ENCODE measurements at regions of chr9 and their contacts with region 1.

Region 1: DNA sequence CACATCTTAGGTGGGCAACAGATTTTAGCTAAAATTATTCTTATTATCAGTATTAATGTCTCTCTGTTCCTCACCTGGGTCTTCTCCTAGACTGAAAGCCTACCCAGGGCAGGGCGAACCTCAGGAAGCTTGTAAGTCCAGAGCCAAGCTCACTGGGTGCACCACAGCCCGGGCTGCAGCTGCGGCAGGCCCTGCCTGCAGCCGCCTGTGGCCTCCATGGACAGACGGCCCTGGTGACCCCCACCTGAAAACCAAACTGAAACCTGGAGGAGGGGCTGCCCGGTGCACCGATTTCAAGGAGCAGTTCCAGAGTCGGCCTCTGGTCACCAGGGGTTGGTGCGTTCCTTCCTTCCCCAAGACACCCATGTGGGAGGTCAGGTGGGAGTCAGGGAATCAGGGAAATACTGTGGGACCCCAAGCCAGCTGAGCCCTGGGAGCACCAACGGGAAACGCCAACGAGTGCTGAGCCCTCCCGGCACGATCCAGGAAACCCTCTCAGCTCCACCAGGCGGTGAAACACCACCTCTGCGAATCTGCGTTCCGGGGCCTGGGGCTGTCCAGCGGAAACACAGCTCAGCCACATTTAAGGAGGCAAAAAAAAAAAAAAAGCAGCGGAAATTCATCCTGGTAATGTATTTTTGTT is 68.6 kb upstream of the PPP1R26 start:
- DNase-seq: peak in 1 of 2 experiments; percentile 56
- H3K4me3 ChIP-seq: no peak overlapping the region
- H3K27ac ChIP-seq: no peak overlapping the region
- H3K4me1 ChIP-seq: no peaks in the 10 kb centered on the region
- H3K27me3 ChIP-seq: no peaks in the 10 kb centered on the region; a peak in 2 of 7 replicates
- CTCF ChIP-seq: peak in 2 of 3 experiments; percentile 16 to 29; a peak in 2 of 4 replicates
- EP300 ChIP-seq: no peak
- POLR2A ChIP-seq: no peak
- RAD21 ChIP-seq: peak in 1 of 2 experiments; percentile 35; a peak in 3 of 4 replicates

Region 2: DNA sequence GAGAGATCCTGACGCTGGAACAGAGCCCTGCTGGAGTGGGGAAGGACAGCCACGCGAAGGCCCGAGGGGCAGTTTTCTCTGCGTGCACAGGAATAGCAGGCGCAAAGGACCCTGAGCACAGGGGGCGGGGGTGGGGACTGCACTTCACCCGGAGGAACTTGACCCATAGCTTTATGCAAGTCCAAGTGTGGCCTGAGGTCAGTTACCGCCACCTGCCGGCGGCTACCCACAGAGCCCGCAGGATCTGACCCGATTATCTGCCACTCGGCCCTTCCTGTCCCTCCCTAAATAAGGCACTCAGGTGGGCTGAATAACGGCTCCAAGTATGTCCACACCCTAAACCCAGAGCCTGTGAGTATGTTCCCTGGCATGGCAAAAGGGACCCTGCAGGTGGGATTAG is 427.9 kb before region 1 on chr9:
- CTCF ChIA-PET with region 1: no interaction called
- POLR2A ChIA-PET with region 1: no interaction called
- DNase-seq: peak; percentile 64 to 80
- H3K4me3 ChIP-seq: no peak overlapping the region
- H3K27ac ChIP-seq: no peak overlapping the region
- H3K4me1 ChIP-seq: peaks cover 0 to 8% (median 6%) of the 10 kb centered on the region in 4 experiments; a peak in 6 of 7 replicates
- H3K27me3 ChIP-seq: no peaks in the 10 kb centered on the region
- CTCF ChIP-seq: peak; percentile 79 to 85 (median 81)
- EP300 ChIP-seq: no peak
- POLR2A ChIP-seq: no peak
- RAD21 ChIP-seq: peak; percentile 93 to 94

Region 3: GRCh38 chr9:135085830-135086546 is 325.0 kb before region 1 on chr9:
- CTCF ChIA-PET with region 1: interaction called, 137 read pairs
- POLR2A ChIA-PET with region 1: interaction called, 4 read pairs
- DNase-seq: peak; percentile 65 to 98
- H3K4me3 ChIP-seq: peak overlapping the region in 3 of 4 experiments; percentile 1 to 57 (median 3); a peak in 4 of 8 replicates
- H3K27ac ChIP-seq: no peak overlapping the region
- H3K4me1 ChIP-seq: peaks cover 0 to 23% (median 6%) of the 10 kb centered on the region in 4 experiments; a peak in 5 of 7 replicates
- H3K27me3 ChIP-seq: peaks cover 0 to 17% (median 12%) of the 10 kb centered on the region in 4 experiments; a peak in 5 of 7 replicates
- CTCF ChIP-seq: peak; percentile 93 to 98 (median 97)
- EP300 ChIP-seq: 0 out of 3 replicates have a peak, but pooled peaks of 1 of the 2 experiments have one; percentile 27
- POLR2A ChIP-seq: no peak
- RAD21 ChIP-seq: peak; percentile 99 to 100

Region 4: DNA sequence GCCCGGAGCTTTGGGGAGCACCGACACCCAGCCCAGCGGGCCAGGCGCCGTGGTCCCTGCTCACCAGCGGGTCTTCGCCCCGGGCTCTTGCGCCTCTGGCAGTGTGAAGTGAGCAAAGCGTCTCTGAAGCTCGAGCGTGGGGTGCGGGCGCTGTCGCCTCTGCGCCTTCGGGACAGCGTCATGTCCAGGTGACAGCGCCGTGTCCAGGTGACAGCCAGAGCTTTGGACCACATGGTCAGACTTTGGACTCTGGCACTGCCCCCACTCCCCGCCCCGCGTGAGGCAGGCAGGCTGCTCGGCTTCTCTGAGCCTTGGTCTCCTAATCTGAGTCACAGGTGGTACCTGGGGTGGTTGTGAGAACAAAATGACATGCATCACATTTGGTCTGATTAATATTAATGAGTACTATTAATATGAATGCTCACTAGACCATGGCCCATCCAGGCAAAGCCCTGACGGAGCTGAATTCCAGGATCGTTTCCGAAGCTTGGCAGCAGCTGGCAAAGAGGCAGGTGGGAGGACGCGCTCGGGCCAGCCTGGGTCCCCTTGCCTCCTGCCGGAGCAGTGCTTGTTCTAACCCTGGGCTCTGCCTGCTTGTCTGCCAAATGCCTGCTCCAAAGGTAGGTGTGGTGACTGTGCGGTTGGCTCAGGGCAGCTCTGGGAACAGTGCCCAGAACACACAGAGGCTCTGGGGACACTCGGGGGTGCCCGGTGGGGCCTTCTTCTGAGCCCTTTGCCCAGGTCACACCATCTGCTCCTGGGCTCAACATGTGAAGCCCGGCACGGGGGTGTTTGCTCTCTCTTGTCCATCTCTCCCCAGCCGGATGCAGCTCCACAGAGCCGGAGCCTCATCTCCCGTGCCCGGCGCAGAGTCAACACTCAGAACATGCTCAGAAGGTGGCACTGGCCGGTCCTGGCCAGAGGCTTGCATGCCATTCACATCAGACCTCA is 166.4 kb before region 1 on chr9:
- CTCF ChIA-PET with region 1: interaction called, 18 read pairs
- POLR2A ChIA-PET with region 1: no interaction called
- DNase-seq: no peak
- H3K4me3 ChIP-seq: no peak overlapping the region
- H3K27ac ChIP-seq: no peak overlapping the region
- H3K4me1 ChIP-seq: no peaks in the 10 kb centered on the region; a peak in 3 of 7 replicates
- H3K27me3 ChIP-seq: no peaks in the 10 kb centered on the region
- CTCF ChIP-seq: no peak
- EP300 ChIP-seq: no peak
- POLR2A ChIP-seq: no peak
- RAD21 ChIP-seq: no peak

Region 5: GRCh38 chr9:135281791-135282731 is 128.9 kb before region 1 on chr9:
- CTCF ChIA-PET with region 1: interaction called, 56 read pairs
- POLR2A ChIA-PET with region 1: no interaction called
- DNase-seq: no peak
- H3K4me3 ChIP-seq: no peak overlapping the region
- H3K27ac ChIP-seq: no peak overlapping the region
- H3K4me1 ChIP-seq: peaks cover 0 to 2% (median 0%) of the 10 kb centered on the region in 4 experiments; a peak in 1 of 7 replicates
- H3K27me3 ChIP-seq: no peaks in the 10 kb centered on the region
- CTCF ChIP-seq: no peak
- EP300 ChIP-seq: no peak
- POLR2A ChIP-seq: no peak
- RAD21 ChIP-seq: no peak

Region 6: DNA sequence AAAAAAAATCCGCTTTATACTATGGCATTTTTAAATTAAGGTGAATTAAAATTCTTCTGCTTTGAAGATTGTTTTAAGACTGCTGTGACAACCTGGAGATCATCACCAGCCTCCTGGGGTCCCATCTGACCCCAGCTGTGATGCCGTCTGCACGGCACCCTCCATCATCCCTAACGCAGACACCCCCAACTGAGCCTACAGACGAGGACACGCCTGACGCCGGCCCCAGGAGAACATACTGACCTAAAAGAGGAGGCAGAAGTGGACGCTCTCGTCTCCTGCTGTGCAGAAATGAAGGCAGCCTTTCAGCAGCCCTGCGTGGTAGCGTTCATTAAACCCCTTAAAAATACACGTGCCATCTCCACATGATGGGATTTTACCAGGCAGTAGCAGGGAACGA is 57.0 kb before region 1 on chr9:
- CTCF ChIA-PET with region 1: interaction called, 74 read pairs
- POLR2A ChIA-PET with region 1: no interaction called
- DNase-seq: no peak
- H3K4me3 ChIP-seq: no peak overlapping the region
- H3K27ac ChIP-seq: no peak overlapping the region
- H3K4me1 ChIP-seq: peaks cover 0 to 4% (median 0%) of the 10 kb centered on the region in 4 experiments; a peak in 2 of 7 replicates
- H3K27me3 ChIP-seq: no peaks in the 10 kb centered on the region
- CTCF ChIP-seq: no peak
- EP300 ChIP-seq: no peak
- POLR2A ChIP-seq: no peak
- RAD21 ChIP-seq: no peak

Region 7: DNA sequence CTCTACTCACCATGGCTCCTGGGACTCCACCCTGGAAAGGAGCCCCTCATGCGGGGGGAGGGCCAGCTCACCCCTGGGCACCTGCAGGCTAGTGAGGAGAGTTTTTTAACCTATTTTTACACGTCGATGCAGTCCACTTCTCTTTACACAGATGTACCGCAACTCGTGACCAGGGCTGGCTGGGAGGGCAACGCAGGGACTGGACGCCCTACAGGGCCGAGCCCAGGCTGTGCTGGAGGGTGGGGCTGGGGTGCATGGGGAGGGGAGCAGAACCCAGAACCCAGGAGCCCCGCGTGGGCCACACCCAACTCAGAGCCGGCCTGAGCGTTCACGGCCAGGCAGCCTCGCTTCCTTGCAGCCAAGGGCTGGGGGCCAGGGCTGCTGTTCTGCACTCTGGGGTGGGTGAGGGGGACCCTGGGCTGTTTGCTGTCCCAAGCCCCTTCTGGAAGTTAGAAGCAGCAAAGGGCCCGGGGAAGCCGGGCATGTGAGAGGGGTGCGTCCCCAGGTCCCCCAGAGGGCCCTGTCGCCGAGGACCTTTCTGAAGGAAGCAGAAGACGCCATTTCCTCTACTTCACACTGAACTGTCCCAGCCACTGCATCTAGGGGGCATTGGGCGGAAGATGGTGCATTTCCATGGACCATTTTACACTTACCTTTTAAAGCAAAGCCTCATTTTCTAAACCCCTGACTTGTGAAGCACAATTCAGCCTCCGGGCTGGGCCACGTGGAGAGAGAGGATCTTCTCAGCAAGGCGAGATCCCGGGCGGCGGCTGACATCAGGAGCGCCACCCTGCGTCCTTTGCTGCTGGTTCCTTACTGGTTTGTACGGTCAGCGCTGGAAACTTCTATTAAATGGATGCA is 381.5 kb after region 1 on chr9:
- CTCF ChIA-PET with region 1: no interaction called
- POLR2A ChIA-PET with region 1: no interaction called
- DNase-seq: no peak
- H3K4me3 ChIP-seq: no peak overlapping the region
- H3K27ac ChIP-seq: no peak overlapping the region
- H3K4me1 ChIP-seq: no peaks in the 10 kb centered on the region
- H3K27me3 ChIP-seq: no peaks in the 10 kb centered on the region
- CTCF ChIP-seq: peak in 1 of 3 experiments; percentile 26; a peak in 1 of 4 replicates
- EP300 ChIP-seq: no peak
- POLR2A ChIP-seq: no peak
- RAD21 ChIP-seq: peak; percentile 2 to 23; a peak in 1 of 4 replicates